Activated T-helper 2 cell treated with anti-CD3 and anti-CD28 coated beads, Interferon-gamma antibody, Interleukin-2, Interleukin-4, amounts not matched to agents 10 μg/mL and 5 μg/mL and 100 μg/mL, durations not matched to agents 14 hours and 24 hours and 36 hours (primary cell): ENCODE measurements at regions of chr10 and their contacts with region 1.

Region 1: DNA sequence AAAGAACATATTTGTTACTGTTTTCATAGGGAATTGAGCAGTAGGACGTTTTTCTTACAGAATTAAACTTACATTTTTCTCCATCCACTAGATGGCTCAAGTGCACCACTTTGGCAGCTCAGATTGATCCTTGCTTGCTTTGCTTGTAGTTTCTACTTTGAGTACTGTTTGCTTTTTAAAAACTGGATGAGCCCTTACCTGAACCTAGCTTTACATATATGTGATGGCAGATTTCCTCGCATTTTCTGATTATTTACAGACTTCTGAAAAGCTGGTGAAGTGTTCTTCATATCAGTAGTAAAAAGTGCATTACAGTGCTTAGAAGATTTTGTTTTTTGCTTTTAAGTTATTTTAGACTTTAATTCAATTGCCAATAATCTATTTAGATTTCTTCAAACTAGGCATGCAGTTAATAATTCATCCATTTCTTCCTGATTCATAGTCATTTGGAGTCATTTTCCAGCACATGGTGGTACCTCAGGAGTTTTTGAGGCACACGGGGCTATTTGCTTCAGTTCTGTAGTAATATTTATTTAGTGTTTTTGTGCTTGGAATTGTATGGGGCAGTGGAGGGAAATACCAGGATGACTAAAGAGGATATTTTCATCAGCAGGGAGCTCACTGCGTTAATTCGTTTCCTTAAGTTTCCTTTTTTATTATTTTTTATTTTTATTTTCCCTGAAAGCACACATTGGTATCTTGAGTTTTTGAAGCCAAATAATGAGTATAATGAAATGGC is 57.3 kb downstream of the MAPK8 start:
- DNase-seq: no peak
- H3K4me3 Mint-ChIP-seq: no peak overlapping the region
- H3K27ac Mint-ChIP-seq: no peak overlapping the region
- H3K4me1 Mint-ChIP-seq: peaks cover 11% of the 10 kb centered on the region
- H3K27me3 Mint-ChIP-seq: no peaks in the 10 kb centered on the region

Region 2: DNA sequence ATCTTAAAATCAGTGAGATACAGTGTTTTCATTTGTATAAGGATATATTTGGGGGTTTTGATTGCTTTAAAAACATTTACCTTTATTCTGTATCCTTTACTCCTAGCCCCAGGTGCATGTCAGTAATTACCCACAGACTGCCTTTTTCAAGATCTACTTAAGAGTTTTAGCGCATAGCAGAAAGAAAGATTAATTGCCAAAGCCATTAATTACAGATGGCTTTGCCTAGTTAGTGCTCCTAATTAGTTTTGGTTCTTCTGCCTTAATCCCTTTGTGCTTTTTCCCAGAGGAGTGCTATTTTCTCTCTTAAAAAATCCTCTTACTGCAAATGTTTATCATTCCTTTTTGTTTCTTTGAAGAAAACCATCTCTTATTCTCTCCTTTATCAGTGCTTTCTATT is 65.5 kb after region 1 on chr10:
- intact Hi-C with region 1: loop called (anchors 10 kb)
- DNase-seq: no peak
- H3K4me3 Mint-ChIP-seq: no peak overlapping the region
- H3K27ac Mint-ChIP-seq: no peak overlapping the region
- H3K4me1 Mint-ChIP-seq: no peaks in the 10 kb centered on the region
- H3K27me3 Mint-ChIP-seq: no peaks in the 10 kb centered on the region

Region 3: GRCh38 chr10:48506147-48506917 is 142.5 kb after region 1 on chr10:
- intact Hi-C with region 1: loop called (anchors 1 kb)
- DNase-seq: no peak
- H3K4me3 Mint-ChIP-seq: no peak overlapping the region
- H3K27ac Mint-ChIP-seq: no peak overlapping the region
- H3K4me1 Mint-ChIP-seq: no peaks in the 10 kb centered on the region
- H3K27me3 Mint-ChIP-seq: peaks cover 2% of the 10 kb centered on the region